Left ventricle myocardium superior (tissue), 1 donor: ENCODE measurements at regions of chr5 and their contacts with region 1.

Region 1: DNA sequence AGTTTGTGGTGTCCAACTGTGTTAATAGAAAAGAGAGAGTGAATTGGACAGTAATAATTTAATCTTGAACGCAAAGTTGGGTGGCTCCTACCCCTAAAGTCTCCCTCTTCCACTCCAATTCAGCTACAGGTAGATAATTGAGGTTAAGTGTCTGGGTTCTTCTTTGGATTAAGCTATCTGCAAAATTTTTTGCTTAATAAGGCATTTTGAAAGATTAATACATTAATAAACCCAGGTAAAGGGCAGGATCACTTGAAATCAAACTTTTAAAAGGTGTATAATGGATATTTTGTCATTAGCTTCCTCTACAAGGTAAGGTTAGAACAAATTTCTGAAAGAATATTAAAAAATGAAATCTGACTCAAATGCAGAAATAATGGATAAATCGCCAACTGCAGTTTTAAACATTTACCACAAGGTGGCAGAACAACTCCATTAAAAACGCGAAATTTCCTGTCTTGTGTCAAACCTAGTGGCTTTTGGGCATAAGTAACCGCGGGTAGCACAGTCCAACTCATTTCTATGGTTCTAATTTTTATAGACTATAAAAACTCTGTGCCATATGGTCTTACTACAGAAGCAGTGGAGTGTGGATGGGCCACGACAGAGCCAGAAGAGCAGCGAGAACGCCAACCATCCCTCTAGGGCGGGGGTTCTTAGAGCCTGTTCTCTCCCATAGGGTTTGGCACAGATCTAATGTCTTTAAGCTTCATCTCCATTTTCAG is 276.5 kb downstream of the ARHGEF28 start:
- DNase-seq: no peak
- ATAC-seq: peak; percentile 32

Region 2: GRCh38 chr5:73998489-73998888 is 96.0 kb after region 1 on chr5:
- intact Hi-C with region 1: no loop called
- DNase-seq: no peak
- ATAC-seq: peak; percentile 38

Region 3: GRCh38 chr5:74648835-74649293 is 746.4 kb after region 1 on chr5:
- intact Hi-C with region 1: loop called (anchors 2 kb)
- DNase-seq: no peak
- ATAC-seq: peak; percentile 93